ENCODE measurements at regions of chr3 and their contacts with region 1.

Region 1: GRCh38 chr3:155352900-155353490 is 59.5 kb upstream of the STRIT1 start:
- DNase-seq: peak; percentile 52 to 55
- ATAC-seq: peak; percentile 73 to 79; a peak in 3 of 6 replicates
- H3K4me3 ChIP-seq: no peak overlapping the region
- H3K27ac ChIP-seq: no peak overlapping the region
- H3K4me1 ChIP-seq: no peaks in the 10 kb centered on the region
- CTCF ChIP-seq: peak; percentile 80
- EP300 ChIP-seq: no peak
- POLR2A ChIP-seq: no peak
- RAD21 ChIP-seq: peak; percentile 80 to 83

Region 2: GRCh38 chr3:155391104-155391503 is 38.1 kb after region 1 on chr3:
- CTCF ChIA-PET with region 1: no interaction called
- POLR2A ChIA-PET with region 1: no interaction called
- DNase-seq: no peak
- ATAC-seq: no peak
- H3K4me3 ChIP-seq: no peak overlapping the region
- H3K27ac ChIP-seq: no peak overlapping the region
- H3K4me1 ChIP-seq: peaks cover 11% of the 10 kb centered on the region
- CTCF ChIP-seq: no peak
- EP300 ChIP-seq: no peak
- POLR2A ChIP-seq: no peak
- RAD21 ChIP-seq: no peak

Region 3: DNA sequence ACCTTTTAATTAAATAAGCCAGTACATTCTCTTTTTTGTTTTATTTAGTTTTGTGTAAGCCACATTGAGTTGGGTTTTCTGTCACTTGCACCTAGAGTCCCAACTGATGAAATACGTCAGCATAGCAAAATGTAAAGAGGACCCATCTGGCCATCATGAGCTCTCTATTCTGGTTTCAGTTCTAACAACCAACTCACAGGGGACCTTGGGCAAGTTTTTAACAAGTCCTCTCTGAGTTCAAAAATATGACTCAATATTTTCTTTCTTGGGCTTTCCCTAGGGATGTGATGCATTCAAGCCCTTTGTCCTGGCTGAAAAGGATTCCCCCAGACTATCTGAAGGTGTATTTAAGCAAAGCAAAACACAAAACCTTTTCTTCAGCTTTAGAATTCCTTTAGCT is 359.0 kb after region 1 on chr3:
- CTCF ChIA-PET with region 1: interaction called, 13 read pairs
- POLR2A ChIA-PET with region 1: no interaction called
- DNase-seq: no peak
- ATAC-seq: no peak
- H3K4me3 ChIP-seq: no peak overlapping the region
- H3K27ac ChIP-seq: no peak overlapping the region
- H3K4me1 ChIP-seq: no peaks in the 10 kb centered on the region
- CTCF ChIP-seq: no peak
- EP300 ChIP-seq: no peak
- POLR2A ChIP-seq: no peak
- RAD21 ChIP-seq: no peak